Right ventricle myocardium inferior (tissue), 1 donor: ENCODE measurements at regions of chr13 and their contacts with region 1.

Region 1: DNA sequence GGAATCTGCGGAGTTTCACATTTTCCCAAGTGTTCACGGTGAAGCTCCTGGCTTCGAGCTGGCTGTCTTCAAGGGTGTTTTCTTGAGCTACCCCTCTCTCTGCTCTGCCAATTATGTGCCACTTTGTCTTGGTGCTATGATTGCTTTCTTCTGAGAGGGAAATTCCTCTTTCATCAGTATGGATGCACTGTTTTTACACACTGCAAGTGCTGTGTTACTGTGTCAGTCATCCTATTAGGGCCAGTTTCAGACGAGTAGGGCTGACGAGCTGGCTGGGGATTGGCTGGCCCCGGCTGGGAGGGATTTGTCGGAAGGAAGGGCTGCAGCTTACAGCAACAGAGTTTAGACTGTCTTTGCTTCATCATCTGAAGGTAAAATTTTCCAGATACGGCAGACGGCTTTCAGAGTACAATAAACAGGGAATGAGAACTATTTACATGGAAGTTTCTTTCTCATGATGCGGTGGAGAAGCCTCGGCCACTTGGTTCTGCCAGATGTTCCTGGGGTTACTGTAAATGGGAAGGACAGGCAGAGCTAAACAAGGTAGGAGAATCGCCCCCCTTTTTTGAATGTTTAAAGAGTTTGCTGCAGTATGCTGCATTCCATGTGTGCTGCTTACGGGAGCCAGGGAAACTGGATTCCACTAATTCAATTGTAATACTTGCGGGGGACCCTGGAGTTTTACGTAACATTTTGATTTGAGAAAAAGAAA is at the start of gene MBNL2:
- DNase-seq: peak; percentile 92
- ATAC-seq: peak; percentile 97
- total RNA-seq, gene MBNL2: 69.1 TPM

Region 2: DNA sequence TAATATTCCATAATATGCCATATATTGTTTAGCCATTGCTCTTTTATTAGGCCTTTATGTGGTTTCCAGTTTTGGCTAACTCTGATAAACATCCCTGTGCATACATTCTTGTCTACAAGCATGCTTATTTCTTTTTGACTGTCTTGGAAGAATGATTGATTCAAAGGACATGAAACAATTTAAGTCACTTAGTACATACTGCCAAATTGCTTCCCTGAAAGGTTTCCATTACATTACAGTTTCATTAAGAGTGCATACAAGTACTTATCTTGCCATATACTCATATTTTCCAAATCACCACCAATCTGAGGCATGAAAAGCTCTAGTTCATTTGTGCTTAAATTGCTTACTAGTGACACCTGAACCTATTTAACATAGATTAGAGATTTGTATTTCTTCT is 341.7 kb before region 1 on chr13:
- intact Hi-C with region 1: no loop called
- DNase-seq: no peak
- ATAC-seq: no peak

Region 3: GRCh38 chr13:97242755-97243497 is 20.8 kb after region 1 on chr13:
- intact Hi-C with region 1: loop called (anchors 2 kb)
- DNase-seq: no peak
- ATAC-seq: peak; percentile 25

Region 4: GRCh38 chr13:97257800-97258799 is 36.0 kb after region 1 on chr13:
- intact Hi-C with region 1: loop called (anchors 2 kb)
- DNase-seq: peak; percentile 71
- ATAC-seq: peak; percentile 61